ENCODE measurements at regions of chr14 and their contacts with region 1.

Region 1: DNA sequence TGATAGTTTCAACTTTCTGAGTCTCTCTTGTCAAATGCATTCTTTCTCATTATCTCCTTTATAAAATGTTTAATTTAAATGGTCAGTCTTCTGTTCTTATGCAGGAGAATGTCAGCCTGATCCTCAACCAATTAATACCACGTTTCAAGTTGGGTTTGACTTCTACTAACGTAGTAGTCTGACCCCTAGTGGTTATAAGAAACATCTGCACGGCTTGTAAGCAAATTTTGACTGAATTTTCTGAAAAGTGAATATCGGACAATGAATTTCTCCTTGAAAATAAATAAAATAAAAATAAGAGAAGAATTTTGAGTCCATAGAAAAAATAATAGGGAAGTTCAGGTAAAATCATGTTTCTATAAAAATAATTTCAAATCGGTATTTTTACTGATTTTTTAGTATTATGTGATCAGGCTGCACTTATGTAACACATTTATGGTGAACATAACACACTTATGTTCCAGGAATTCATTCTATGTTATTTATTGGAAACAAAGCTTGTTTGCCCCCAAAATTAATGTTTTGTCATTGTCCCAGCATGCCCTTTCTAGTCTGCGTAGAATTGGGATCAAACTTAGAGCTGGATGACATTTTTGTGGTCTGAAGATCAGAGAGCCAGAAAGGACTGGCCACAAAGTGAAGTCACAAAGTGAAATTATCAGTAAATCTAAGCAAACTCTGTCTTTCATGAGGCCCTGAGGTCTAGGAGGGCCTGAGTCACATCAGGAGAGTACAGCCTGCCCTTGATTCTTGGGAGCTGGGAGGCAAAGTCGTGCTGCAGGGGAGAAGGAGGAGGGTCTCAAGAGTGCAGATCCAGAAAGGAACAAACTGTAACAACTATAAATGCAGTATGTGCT is 101.2 kb upstream of the STXBP6 start:
- DNase-seq: no peak
- H3K4me3 ChIP-seq: no peak overlapping the region
- H3K27ac ChIP-seq: no peak overlapping the region
- H3K4me1 ChIP-seq: no peaks in the 10 kb centered on the region
- H3K27me3 ChIP-seq: no peaks in the 10 kb centered on the region
- CTCF ChIP-seq: peak; percentile 48 to 83 (median 70)
- POLR2A ChIP-seq: no peak

Region 2: GRCh38 chr14:24734878-24735500 is 416.2 kb before region 1 on chr14:
- intact Hi-C with region 1: loop called (anchors 10 kb)
- DNase-seq: no peak
- H3K4me3 ChIP-seq: no peak overlapping the region
- H3K27ac ChIP-seq: no peak overlapping the region
- H3K4me1 ChIP-seq: no peaks in the 10 kb centered on the region
- H3K27me3 ChIP-seq: peaks cover 0 to 5% (median 0%) of the 10 kb centered on the region in 4 donors
- CTCF ChIP-seq: peak; percentile 28 to 65 (median 62)
- POLR2A ChIP-seq: no peak

Region 3: DNA sequence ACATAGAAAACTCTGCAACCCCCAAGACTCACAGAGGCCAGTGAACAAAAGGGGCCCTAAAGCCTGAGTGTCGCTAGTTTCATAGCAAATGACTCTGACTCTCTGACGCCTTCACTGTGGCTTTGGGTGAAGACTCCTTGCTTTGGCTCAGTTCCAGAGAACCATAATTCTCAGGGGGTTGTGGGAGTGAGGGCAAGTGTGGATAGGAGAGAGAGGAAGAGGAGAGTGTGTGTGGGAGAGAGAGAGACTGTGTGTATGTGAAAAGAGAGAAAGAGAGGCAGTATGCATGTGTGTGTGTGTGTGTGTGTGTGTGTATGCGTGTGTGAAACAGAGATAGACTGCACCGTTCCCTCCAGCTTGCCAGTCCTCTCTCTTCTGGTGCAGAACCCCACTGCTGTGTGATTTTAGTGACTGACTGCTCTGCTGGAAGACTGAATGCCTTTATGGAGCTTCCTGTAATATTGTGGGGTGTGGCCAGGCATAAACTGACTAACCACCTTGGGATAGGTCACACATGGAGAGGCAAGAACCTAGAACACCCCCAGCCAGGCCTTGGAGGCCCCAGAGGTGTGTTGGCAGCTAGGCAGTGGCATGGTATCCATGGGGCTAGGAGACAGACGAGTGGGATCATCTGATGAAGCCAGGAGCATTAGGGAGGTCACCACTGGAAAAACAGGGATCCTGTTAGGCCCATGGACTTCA is 55.3 kb before region 1 on chr14:
- intact Hi-C with region 1: no loop called
- DNase-seq: no peak
- H3K4me3 ChIP-seq: no peak overlapping the region
- H3K27ac ChIP-seq: no peak overlapping the region
- H3K4me1 ChIP-seq: peaks cover 0 to 8% (median 0%) of the 10 kb centered on the region in 3 donors
- H3K27me3 ChIP-seq: no peaks in the 10 kb centered on the region
- CTCF ChIP-seq: no peak
- POLR2A ChIP-seq: no peak

Region 4: DNA sequence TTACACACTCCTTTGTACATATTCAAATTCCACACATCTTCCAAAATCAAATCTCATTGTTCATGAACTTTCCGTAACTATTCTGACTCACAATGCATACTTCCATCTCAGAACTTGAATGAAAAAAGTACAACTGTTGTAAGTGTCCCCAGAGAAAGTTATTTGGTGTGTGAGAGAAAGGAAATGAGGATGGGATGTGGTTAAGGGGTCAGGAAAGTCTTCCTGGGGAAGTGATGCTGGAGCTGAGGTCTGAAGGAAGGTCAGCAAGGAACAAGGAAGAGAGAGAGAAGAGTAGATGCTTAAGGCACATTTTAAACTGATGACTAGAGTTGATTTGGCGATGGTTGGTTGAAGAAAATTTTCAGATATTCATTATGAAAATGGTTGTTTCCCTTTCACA is 238.8 kb after region 1 on chr14:
- intact Hi-C with region 1: no loop called
- DNase-seq: no peak
- H3K4me3 ChIP-seq: no peak overlapping the region
- H3K27ac ChIP-seq: no peak overlapping the region
- H3K4me1 ChIP-seq: no peaks in the 10 kb centered on the region
- H3K27me3 ChIP-seq: no peaks in the 10 kb centered on the region
- CTCF ChIP-seq: no peak
- POLR2A ChIP-seq: no peak